Dorsolateral prefrontal cortex (tissue), 120 donors: ENCODE measurements at regions of chr10 and their contacts with region 1.

Region 1: GRCh38 chr10:62594093-62594520 is 210.4 kb upstream of the ADO start:
- DNase-seq: peak in 9 of 10 donors; percentile 19 to 76 (median 46)
- H3K4me3 ChIP-seq: no peak overlapping the region
- H3K27ac ChIP-seq: no peak overlapping the region
- H3K27me3 ChIP-seq: no peaks in the 10 kb centered on the region
- CTCF ChIP-seq: peak; percentile 52 to 96 (median 85)

Region 2: DNA sequence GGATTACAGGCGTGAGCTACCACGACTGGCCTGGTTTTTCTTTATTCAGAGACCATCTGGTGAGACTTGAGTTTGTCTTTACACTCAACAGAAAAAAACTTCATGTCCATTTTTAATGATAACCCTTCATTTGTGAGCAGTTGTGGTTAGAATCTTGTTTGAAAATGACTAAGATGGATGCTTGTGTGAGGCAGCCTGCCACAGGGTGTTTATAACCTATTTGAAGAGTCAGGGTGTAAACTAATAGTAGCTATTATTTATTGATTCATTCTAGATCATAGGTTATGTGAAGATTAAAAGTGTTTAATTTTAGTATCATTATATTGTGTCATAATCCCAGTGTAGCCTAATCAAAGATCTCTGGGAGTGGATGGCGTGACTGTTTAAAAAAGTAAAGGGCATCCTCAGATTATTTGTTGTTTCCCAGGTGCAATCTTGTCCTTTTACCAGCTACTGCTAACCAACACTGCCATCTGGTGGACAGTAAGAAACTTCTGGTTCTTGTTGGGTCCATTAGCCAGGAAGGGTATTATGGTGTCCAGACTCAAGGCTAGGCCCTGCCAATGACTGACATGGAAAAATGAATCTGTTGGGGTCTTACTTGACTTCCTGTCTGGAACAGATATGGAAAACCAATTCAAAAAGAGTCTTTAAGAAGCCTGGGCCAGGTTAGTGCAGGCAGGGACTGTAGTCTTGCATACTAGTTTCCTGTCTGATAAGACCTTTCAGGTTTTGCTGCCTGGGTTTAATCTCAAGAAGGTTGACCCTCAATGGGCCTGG is 563.9 kb after region 1 on chr10:
- intact Hi-C with region 1: loop called (anchors 10 kb)
- DNase-seq: peak in 1 of 10 donors; percentile 32
- H3K4me3 ChIP-seq: no peak overlapping the region
- H3K27ac ChIP-seq: no peak overlapping the region
- H3K27me3 ChIP-seq: no peaks in the 10 kb centered on the region
- CTCF ChIP-seq: peak; percentile 69 to 96 (median 88)